ENCODE measurements at regions of chr6 and their contacts with region 1.

Region 1: DNA sequence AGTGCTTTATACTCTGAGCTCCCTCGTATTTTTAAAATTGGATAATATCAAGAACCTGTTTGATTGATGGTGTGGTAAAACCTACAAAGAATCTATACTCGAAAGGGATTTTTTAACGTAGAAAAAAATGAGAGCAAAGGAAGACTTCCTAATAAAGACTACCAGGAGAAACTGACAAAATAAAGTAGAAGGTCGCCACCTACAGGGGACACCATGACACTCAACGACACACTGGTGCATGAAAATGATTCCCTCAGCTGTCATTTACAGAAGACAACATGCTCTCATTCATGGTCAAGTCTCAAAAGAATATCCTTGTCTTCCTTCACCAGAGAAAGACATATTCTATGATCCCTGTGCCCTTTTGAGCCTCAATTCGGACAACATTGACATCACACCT is 10.1 kb upstream of the NHSL1 start:
- DNase-seq: no peak
- ATAC-seq: peak; percentile 62

Region 2: GRCh38 chr6:138428944-138429598 is 80.3 kb before region 1 on chr6:
- intact Hi-C with region 1: loop called (anchors 2 kb)
- DNase-seq: no peak
- ATAC-seq: peak; percentile 30

Region 3: GRCh38 chr6:138455746-138456400 is 53.5 kb before region 1 on chr6:
- intact Hi-C with region 1: no loop called
- DNase-seq: no peak
- ATAC-seq: no peak